ENCODE measurements at regions of chr15 and their contacts with region 1.

Region 1: DNA sequence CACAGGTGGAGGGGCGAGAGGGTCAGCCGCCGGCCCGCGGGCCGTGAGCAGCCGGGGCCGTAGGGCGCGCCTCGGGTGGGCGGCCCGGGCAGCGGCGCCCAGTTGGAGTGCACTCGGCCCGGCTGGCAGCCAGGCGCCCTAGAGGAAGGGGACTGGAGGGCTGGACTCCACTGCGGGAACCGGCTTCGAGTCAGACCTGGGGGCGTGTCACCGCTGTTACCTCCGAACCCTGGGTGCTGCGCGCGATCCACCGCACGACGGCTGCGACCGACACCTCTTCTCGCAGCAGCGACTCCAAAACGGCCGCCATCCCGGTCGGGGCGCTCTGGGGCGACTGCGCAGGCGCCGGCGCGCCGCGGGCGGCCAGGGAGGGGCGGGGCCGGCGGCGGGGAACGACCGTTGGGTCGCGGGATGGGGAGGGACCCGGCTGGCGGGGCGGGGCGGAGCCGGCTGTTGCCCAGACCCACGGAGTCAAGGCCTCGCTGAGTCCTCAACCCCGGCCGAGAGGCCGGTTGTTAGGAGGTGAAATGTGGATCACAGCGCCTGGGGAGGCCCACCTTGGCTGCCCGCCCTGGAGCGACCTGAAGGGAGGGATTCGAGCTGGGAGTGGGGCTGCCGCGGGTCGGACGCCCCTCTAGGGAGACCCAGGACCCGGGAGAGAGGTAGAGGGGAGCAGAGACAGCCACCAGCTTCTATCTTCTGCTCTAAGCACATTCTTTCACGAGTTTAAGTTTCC is at the start of gene CDAN1:
- DNase-seq: peak; percentile 66 to 94
- H3K4me3 ChIP-seq: peak within 1 kb of the TSS; percentile 68 to 92
- H3K27ac ChIP-seq: peak within 1 kb of the TSS; percentile 84 to 91
- H3K4me1 ChIP-seq: peaks cover 9 to 20% of the 10 kb centered on the region in 2 donors
- H3K27me3 ChIP-seq: no peaks in the 10 kb centered on the region
- CTCF ChIP-seq: no peak
- total RNA-seq, gene CDAN1: 16.2 TPM

Region 2: GRCh38 chr15:42772144-42772543 is 35.2 kb after region 1 on chr15:
- intact Hi-C with region 1: loop called (anchors 2 kb)
- DNase-seq: peak in 1 of 2 donors; percentile 69
- H3K4me3 ChIP-seq: no peak overlapping the region
- H3K27ac ChIP-seq: peak overlapping the region in 1 of 2 donors; percentile 51
- H3K4me1 ChIP-seq: peaks cover 0 to 11% of the 10 kb centered on the region in 2 donors
- H3K27me3 ChIP-seq: no peaks in the 10 kb centered on the region
- CTCF ChIP-seq: no peak